GM12878 (cell line): ENCODE measurements at regions of chr2 and their contacts with region 1.

Region 1: DNA sequence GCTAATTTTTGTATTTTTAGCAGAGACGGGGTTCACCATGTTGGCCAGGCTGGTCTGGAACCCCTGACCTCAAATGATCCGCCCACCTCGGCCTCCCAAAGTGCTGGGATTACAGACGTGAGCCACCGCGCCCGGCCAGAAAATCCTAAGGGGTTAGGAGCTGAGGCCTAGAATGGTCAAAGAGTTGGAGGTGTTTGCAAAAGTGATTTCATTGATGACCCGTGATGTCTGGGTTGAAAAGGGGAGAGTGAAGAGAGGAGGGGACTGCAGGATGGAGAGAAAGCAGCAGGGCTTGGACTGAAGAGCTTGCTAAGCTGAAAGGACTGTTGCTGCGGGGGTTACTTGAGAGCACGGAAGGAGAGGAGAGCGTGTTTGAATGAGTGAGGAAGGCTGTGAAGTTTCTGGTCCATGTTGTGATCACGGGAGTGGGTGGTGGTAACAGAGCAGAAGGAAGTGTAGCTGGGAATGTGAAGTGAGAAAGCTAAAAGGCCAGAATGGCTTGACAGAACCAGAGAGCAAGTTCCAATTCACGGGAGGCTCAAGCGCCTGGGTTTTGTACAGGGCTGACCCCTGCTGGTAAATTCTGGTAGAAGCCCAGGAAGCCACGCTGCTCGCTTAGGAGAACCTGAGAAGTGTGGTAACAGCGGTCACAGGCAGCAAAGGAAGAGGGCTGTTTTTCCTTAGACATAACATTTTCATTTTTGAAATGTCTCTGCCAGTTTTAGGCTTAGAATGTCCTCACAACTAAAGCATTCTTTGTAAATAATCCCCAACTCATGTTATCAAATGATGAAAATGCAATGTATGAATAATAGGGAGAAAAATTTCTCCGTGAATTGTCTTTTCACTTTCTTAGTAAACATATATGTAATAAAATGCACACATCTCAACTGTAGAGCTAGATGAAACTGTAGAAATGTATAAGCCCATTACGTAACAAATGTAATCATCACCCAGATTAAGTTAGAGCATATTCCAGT is 40.5 kb upstream of the ACTR2 start:
- DNase-seq: no peak
- ATAC-seq: peak; percentile 98
- H3K4me3 ChIP-seq: no peak overlapping the region
- H3K27ac ChIP-seq: no peak overlapping the region
- H3K4me1 ChIP-seq: no peaks in the 10 kb centered on the region
- H3K27me3 ChIP-seq: no peaks in the 10 kb centered on the region; a peak in 1 of 4 replicates
- CTCF ChIP-seq: peak; percentile 77 to 82 (median 80)
- EP300 ChIP-seq: no peak
- POLR2A ChIP-seq: no peak
- RAD21 ChIP-seq: peak; percentile 82

Region 2: DNA sequence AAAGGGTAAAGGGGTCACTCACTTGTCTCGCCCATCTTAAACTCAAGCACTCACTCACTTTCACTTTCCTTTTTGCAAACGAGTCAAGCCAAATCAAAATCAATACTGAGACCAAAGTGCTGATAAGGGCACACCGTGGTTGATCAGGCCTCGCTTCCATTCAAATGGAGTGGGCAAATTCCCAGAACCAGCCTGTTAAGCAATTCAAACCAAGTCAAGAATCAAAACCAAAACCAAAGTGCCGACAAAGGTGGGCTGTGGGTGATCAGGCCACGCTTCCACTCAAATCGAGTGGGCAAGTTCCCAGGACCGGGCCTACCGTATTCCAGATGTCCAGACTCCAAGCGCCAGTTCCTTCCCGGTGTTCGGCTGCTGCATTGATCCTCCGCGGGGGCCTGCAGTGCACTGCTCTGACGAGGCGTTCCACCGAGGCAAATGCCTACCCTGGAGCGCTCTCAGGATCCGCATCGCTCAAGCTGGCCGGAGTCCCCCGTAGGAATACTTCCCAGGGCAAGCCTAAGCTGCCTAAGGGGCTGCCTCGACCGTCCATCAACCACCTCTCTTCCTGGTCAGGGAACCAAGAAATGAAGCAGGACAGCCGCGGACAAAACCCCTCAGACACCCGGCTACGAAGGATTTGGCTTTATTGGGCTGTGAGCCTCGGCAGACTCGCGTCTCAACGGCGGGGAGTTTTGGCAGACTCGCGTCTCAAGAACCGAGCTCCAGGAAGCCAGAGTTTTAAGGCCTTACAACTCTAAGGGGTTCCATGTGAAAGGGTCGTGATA is 287.9 kb before region 1 on chr2:
- CTCF ChIA-PET with region 1: no interaction called
- POLR2A ChIA-PET with region 1: no interaction called
- RAD21 ChIA-PET with region 1: no interaction called
- SMC1A ChIA-PET with region 1: no interaction called
- in situ Hi-C with region 1: no loop called
- intact Hi-C with region 1: loop called (anchors 10 kb)
- DNase-seq: no peak
- ATAC-seq: no peak
- H3K4me3 ChIP-seq: no peak overlapping the region
- H3K27ac ChIP-seq: no peak overlapping the region
- H3K4me1 ChIP-seq: no peaks in the 10 kb centered on the region; the same call in 1 of the 2 replicates
- H3K27me3 ChIP-seq: no peaks in the 10 kb centered on the region
- CTCF ChIP-seq: no peak
- EP300 ChIP-seq: no peak
- POLR2A ChIP-seq: no peak
- RAD21 ChIP-seq: no peak

Region 3: GRCh38 chr2:65070172-65070830 is 116.9 kb before region 1 on chr2:
- CTCF ChIA-PET with region 1: interaction called, 117 read pairs
- POLR2A ChIA-PET with region 1: interaction called, 3 read pairs
- RAD21 ChIA-PET with region 1: interaction called, 35 read pairs
- SMC1A ChIA-PET with region 1: interaction called, 56 read pairs
- in situ Hi-C with region 1: loop called (anchors 5 kb)
- intact Hi-C with region 1: loop called (anchors 1 kb)
- DNase-seq: no peak
- ATAC-seq: no peak
- H3K4me3 ChIP-seq: no peak overlapping the region
- H3K27ac ChIP-seq: no peak overlapping the region
- H3K4me1 ChIP-seq: peaks cover 16% of the 10 kb centered on the region
- H3K27me3 ChIP-seq: no peaks in the 10 kb centered on the region
- CTCF ChIP-seq: no peak
- EP300 ChIP-seq: no peak
- POLR2A ChIP-seq: no peak
- RAD21 ChIP-seq: no peak

Region 4: DNA sequence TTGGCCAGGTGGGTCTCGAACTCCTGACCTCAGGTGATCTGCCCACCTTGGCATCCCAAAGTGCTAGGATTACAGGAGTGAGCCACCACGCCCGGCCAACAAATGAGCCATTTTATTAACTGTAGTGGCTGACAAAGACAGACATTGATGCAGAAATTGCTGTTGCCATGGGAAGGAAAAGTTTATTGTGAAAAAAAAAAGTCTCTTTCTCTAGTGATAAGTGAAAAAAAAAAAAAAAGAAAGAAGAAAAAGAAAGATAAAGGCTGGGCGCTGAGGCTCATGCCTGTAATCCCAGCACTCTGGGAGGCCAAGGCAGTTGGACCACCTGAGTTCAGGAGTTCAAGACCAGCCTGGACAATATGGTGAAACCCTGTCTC is 17.4 kb before region 1 on chr2:
- CTCF ChIA-PET with region 1: interaction called, 11 read pairs
- POLR2A ChIA-PET with region 1: no interaction called
- RAD21 ChIA-PET with region 1: interaction called, 3 read pairs
- SMC1A ChIA-PET with region 1: interaction called, 4 read pairs
- in situ Hi-C with region 1: no loop called
- intact Hi-C with region 1: no loop called
- DNase-seq: no peak
- ATAC-seq: no peak
- H3K4me3 ChIP-seq: no peak overlapping the region
- H3K27ac ChIP-seq: no peak overlapping the region
- H3K4me1 ChIP-seq: no peaks in the 10 kb centered on the region; the same call in 1 of the 2 replicates
- H3K27me3 ChIP-seq: no peaks in the 10 kb centered on the region
- CTCF ChIP-seq: no peak
- EP300 ChIP-seq: no peak
- POLR2A ChIP-seq: no peak
- RAD21 ChIP-seq: no peak

Region 5: DNA sequence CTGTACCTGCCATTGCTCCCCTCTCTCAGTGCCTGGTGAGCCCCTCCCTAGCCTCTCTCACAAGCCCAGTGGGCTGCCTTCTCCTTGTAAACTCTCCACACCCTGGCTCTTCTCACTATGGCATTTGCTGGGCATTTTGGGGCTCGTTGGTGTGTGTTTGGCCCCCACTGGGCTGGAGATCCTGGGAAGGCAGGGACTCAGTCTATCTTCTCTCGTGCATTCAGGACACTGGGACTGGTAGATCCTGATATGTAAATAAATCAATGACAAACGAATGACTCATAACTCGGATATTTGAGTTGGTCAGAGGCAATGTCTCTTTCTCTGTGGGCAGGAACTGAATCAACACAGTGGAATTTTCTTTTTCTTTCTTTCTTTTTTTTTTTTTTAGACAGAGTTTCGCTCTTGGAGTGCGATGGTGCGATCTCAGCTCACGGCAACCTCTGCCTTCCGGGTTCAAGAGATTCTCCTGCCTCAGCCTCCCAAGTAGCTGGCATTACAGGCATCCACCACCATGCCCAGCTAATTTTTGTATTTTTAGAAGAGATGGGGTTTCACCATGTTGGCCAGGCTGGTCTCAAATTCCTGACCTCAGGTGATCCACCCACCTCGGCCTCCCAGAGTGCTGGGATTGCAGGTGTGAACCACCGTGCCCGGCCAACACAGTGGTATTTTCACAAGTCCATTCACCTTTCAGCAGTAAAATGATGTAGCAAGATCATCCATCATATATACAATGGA is 389.9 kb after region 1 on chr2:
- CTCF ChIA-PET with region 1: interaction called, 4 read pairs
- POLR2A ChIA-PET with region 1: no interaction called
- RAD21 ChIA-PET with region 1: interaction called, 3 read pairs
- SMC1A ChIA-PET with region 1: no interaction called
- in situ Hi-C with region 1: no loop called
- intact Hi-C with region 1: loop called (anchors 5 kb)
- DNase-seq: no peak
- ATAC-seq: no peak
- H3K4me3 ChIP-seq: no peak overlapping the region
- H3K27ac ChIP-seq: no peak overlapping the region
- H3K4me1 ChIP-seq: peaks cover 3% of the 10 kb centered on the region; the same call in 1 of the 2 replicates
- H3K27me3 ChIP-seq: no peaks in the 10 kb centered on the region; a peak in 1 of 4 replicates
- CTCF ChIP-seq: no peak
- EP300 ChIP-seq: no peak
- POLR2A ChIP-seq: no peak
- RAD21 ChIP-seq: no peak